Naive thymus-derived CD4-positive, alpha-beta T cell (primary cell): ENCODE measurements at regions of chrX and their contacts with region 1.

Region 1: DNA sequence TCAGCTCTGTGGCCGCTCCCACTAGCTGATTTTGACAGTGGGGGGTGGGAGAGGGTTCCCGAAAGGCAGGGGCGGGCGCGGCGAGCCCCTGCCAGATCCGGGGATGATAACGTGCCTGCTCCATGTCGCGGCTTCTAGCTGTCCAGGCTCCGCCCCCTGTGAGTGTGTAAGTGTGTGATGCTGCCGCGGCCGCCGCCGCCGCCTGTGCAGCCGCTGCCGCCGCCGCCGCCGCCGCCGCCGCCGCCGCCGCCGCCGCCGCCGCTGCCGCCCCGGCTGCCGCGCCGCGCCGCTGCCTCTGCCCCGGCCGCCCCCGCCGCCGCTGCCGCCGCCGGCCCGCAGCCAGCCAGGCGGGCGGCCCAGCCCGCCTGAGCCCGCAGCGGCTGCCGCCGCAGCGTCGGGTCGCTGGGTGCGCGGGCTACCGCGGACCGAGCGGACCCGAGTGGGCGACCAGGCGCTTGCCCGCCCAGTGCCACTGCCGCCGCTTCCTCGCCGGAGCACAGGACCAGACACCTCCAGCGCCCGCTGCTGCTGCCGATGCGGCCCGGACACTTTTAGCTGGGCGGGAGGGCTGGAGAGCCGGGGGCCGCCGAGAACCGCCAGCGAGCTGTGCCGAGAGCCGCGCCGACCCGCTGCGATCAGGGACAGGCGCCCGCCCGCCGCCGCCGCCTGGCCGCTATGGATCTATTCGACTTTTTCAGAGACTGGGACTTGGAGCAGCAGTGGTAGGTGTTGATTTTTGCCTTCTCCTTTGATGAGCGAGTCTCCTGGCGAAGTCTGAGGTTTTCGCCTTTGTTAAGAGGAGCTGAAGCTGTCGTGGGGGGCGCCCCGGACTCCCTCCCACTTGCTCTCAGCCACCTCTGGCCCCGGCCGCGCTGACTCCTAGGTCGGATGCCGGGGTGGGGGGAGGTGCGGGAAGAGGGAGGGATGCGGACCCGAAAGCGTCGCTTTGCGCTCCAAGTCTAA is at the start of gene AFF2:
- DNase-seq: peak in 8 of 9 donors; percentile 18 to 46 (median 30)
- ATAC-seq: peak; percentile 73
- H3K4me3 ChIP-seq: peak within 1 kb of the TSS; percentile 38
- H3K4me3 Mint-ChIP-seq: peak within 1 kb of the TSS; percentile 79 to 92 (median 86)
- H3K27ac ChIP-seq: no peak within 1 kb of the TSS
- H3K27ac Mint-ChIP-seq: no peak within 1 kb of the TSS
- H3K4me1 ChIP-seq: no peaks in the 10 kb centered on the region
- H3K4me1 Mint-ChIP-seq: peaks cover 2 to 30% (median 13%) of the 10 kb centered on the region in 7 donors
- H3K27me3 ChIP-seq: no peaks in the 10 kb centered on the region
- H3K27me3 Mint-ChIP-seq: peaks cover 0 to 19% (median 0%) of the 10 kb centered on the region in 5 donors
- total RNA-seq, gene AFF2: 2.7 to 6.0 (median 4.7) TPM

Region 2: GRCh38 chrX:148333989-148334388 is 166.7 kb before region 1 on chrX:
- CTCF ChIA-PET with region 1: no interaction called
- POLR2A ChIA-PET with region 1: no interaction called
- intact Hi-C with region 1: loop called in 1 of 2 experiments (anchors 2 kb)
- DNase-seq: peak in 7 of 9 donors; percentile 8 to 72 (median 47)
- ATAC-seq: peak; percentile 73
- H3K4me3 ChIP-seq: no peak overlapping the region
- H3K4me3 Mint-ChIP-seq: peak overlapping the region; percentile 18 to 81 (median 70)
- H3K27ac ChIP-seq: peak overlapping the region; percentile 58
- H3K27ac Mint-ChIP-seq: peak overlapping the region; percentile 85 to 98 (median 92)
- H3K4me1 ChIP-seq: peaks cover 11 to 45% of the 10 kb centered on the region in 2 donors
- H3K4me1 Mint-ChIP-seq: peaks cover 17 to 93% (median 74%) of the 10 kb centered on the region in 7 donors
- H3K27me3 ChIP-seq: no peaks in the 10 kb centered on the region
- H3K27me3 Mint-ChIP-seq: no peaks in the 10 kb centered on the region